ENCODE measurements at regions of chr12 and their contacts with region 1.

Region 1: GRCh38 chr12:5083955-5084849 is 40.5 kb downstream of the KCNA5 start:
- DNase-seq: peak; percentile 37 to 38
- H3K4me3 ChIP-seq: no peak overlapping the region
- CTCF ChIP-seq: no peak
- POLR2A ChIP-seq: no peak

Region 2: GRCh38 chr12:4857472-4858291 is 226.5 kb before region 1 on chr12:
- intact Hi-C with region 1: loop called (anchors 10 kb)
- DNase-seq: peak; percentile 67 to 92
- H3K4me3 ChIP-seq: no peak overlapping the region
- CTCF ChIP-seq: peak in 1 of 3 donors; percentile 43
- POLR2A ChIP-seq: no peak

Region 3: DNA sequence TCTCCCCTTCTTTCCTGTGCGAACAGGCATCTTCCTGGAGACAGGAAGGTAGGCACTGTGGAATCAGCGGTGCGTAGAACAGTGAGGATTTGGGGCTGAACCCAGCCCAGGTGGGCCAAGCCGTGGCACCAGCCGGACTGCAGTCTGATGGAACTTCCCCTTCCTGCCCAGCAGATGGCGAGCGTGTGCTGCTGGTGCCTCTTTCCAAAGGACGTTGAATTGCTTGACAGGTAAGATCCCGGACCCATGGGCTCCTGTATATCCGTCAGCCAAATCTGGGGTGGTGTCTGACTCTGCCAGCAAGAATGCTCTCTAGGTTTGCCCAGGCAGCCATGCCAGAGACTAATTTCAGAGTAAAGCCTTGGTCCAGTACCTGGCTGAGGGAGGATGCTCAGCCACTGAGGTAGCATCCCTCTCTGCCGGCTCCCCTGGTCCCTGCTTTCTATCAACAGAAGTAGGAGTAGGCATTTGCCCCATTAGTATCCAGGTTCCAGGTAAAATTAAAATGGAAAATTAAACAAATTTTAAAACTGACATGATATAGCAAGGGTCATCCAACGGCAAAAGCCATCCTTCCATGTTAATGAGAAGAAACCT is 61.6 kb before region 1 on chr12:
- intact Hi-C with region 1: loop called (anchors 2 kb)
- DNase-seq: peak in 1 of 2 donors; percentile 86
- H3K4me3 ChIP-seq: no peak overlapping the region
- CTCF ChIP-seq: peak in 1 of 3 donors; percentile 46
- POLR2A ChIP-seq: no peak

Region 4: DNA sequence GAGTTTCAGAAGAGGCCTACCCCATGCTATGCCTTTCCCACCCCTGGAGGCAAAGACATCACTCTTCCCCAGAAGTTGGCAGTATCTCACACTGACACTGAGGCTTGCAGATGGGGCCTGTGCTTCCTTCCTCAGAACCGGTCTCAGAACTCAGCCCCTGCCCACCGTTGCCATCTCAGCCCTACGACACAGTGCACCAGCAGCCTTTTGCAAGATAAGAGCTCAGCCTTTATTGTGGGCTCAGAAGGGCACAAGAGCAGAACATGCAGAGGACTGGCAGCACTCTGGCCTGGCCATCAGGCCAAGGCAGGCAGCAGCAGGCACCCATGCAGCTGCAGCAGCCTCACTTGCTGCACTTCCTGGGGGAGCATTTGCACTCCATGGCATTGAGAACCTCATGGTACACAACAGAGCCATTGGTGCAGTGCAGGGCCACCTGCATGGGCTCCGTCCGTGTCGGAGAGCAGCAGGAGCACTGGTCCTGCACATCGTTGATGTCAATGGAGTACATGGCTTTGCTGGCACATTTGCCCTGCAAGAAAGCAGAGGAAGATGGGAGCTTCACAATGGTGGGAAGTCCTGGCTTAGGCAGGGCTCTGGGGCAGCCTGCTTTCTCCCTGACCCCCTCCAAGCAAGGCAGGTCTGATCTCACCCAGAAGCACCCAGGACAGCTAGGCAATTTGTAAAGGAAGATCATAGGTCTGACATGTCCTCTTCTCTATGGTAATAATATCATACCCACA is 864.6 kb after region 1 on chr12:
- intact Hi-C with region 1: no loop called
- DNase-seq: no peak
- H3K4me3 ChIP-seq: no peak overlapping the region
- CTCF ChIP-seq: no peak
- POLR2A ChIP-seq: no peak

Region 5: GRCh38 chr12:6345319-6346091 is 1261.3 kb after region 1 on chr12:
- intact Hi-C with region 1: no loop called
- DNase-seq: no peak
- H3K4me3 ChIP-seq: no peak overlapping the region
- CTCF ChIP-seq: no peak
- POLR2A ChIP-seq: no peak

Measured in lower leg skin (tissue), 4 donors.